Naive thymus-derived CD4-positive, alpha-beta T cell (primary cell): ENCODE measurements at regions of chr4 and their contacts with region 1.

Region 1: GRCh38 chr4:86924811-86925210 is 10.0 kb upstream of the AFF1 start:
- DNase-seq: no peak
- ATAC-seq: no peak
- H3K4me3 ChIP-seq: no peak overlapping the region
- H3K4me3 Mint-ChIP-seq: no peak overlapping the region
- H3K27ac ChIP-seq: no peak overlapping the region
- H3K27ac Mint-ChIP-seq: peak overlapping the region in 3 of 9 donors; percentile 8 to 50 (median 32)
- H3K4me1 ChIP-seq: no peaks in the 10 kb centered on the region
- H3K4me1 Mint-ChIP-seq: peaks cover 0 to 25% (median 5%) of the 10 kb centered on the region in 7 donors
- H3K27me3 ChIP-seq: no peaks in the 10 kb centered on the region
- H3K27me3 Mint-ChIP-seq: no peaks in the 10 kb centered on the region

Region 2: GRCh38 chr4:87093443-87094123 is 168.8 kb after region 1 on chr4:
- CTCF ChIA-PET with region 1: interaction called, 215 read pairs
- POLR2A ChIA-PET with region 1: interaction called, 26 read pairs
- intact Hi-C with region 1: loop called (anchors 1 kb)
- DNase-seq: peak in 7 of 9 donors; percentile 26 to 60 (median 51)
- ATAC-seq: peak; percentile 90
- H3K4me3 ChIP-seq: no peak overlapping the region
- H3K4me3 Mint-ChIP-seq: no peak overlapping the region
- H3K27ac ChIP-seq: no peak overlapping the region
- H3K27ac Mint-ChIP-seq: peak overlapping the region; percentile 26 to 91 (median 74)
- H3K4me1 ChIP-seq: no peaks in the 10 kb centered on the region
- H3K4me1 Mint-ChIP-seq: peaks cover 10 to 47% (median 25%) of the 10 kb centered on the region in 7 donors
- H3K27me3 ChIP-seq: no peaks in the 10 kb centered on the region
- H3K27me3 Mint-ChIP-seq: no peaks in the 10 kb centered on the region

Region 3: GRCh38 chr4:87103691-87104187 is 178.9 kb after region 1 on chr4:
- CTCF ChIA-PET with region 1: interaction called, 35 read pairs
- POLR2A ChIA-PET with region 1: interaction called, 3 read pairs
- intact Hi-C with region 1: no loop called
- DNase-seq: peak in 7 of 9 donors; percentile 45 to 83 (median 64)
- ATAC-seq: peak; percentile 87
- H3K4me3 ChIP-seq: no peak overlapping the region
- H3K4me3 Mint-ChIP-seq: peak overlapping the region; percentile 24 to 81 (median 69)
- H3K27ac ChIP-seq: peak overlapping the region; percentile 56
- H3K27ac Mint-ChIP-seq: peak overlapping the region; percentile 65 to 99 (median 92)
- H3K4me1 ChIP-seq: peaks cover 13 to 23% of the 10 kb centered on the region in 2 donors
- H3K4me1 Mint-ChIP-seq: peaks cover 26 to 75% (median 60%) of the 10 kb centered on the region in 7 donors
- H3K27me3 ChIP-seq: no peaks in the 10 kb centered on the region
- H3K27me3 Mint-ChIP-seq: no peaks in the 10 kb centered on the region

Region 4: GRCh38 chr4:87150498-87151261 is 225.9 kb after region 1 on chr4:
- CTCF ChIA-PET with region 1: no interaction called
- POLR2A ChIA-PET with region 1: no interaction called
- intact Hi-C with region 1: loop called in 1 of 2 experiments (anchors 1 kb)
- DNase-seq: peak in 8 of 9 donors; percentile 32 to 71 (median 55)
- ATAC-seq: peak; percentile 85
- H3K4me3 ChIP-seq: no peak overlapping the region
- H3K4me3 Mint-ChIP-seq: no peak overlapping the region
- H3K27ac ChIP-seq: no peak overlapping the region
- H3K27ac Mint-ChIP-seq: no peak overlapping the region
- H3K4me1 ChIP-seq: no peaks in the 10 kb centered on the region
- H3K4me1 Mint-ChIP-seq: peaks cover 0 to 4% (median 0%) of the 10 kb centered on the region in 7 donors
- H3K27me3 ChIP-seq: no peaks in the 10 kb centered on the region
- H3K27me3 Mint-ChIP-seq: no peaks in the 10 kb centered on the region